Mucosa of descending colon (tissue), 3 donors: ENCODE measurements at regions of chr7 and their contacts with region 1.

Region 1: DNA sequence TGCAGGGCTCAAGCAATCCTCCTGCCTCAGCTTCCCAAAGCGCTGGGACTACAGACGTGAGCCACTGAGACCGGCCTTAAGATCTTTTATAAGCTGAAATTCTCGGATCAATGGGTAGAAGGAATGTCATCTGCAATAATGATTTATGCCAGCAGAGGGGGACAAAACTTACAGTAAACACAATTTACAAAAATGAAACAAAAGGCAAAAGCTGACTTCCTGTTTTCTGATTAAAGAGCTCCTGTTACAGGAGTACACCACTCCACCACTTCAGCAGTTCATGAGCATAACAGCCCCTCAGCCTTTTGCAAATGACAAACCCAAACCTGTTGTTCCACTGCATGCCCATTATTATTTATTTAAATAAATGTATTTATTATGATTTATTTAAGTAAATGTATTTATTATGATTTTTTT is 88.5 kb upstream of the ATP6V0A4 start:
- DNase-seq: peak in 1 of 3 donors; percentile 90
- ATAC-seq: peak; percentile 83
- H3K4me3 ChIP-seq: no peak overlapping the region
- H3K4me1 ChIP-seq: no peaks in the 10 kb centered on the region
- CTCF ChIP-seq: peak; percentile 30

Region 2: DNA sequence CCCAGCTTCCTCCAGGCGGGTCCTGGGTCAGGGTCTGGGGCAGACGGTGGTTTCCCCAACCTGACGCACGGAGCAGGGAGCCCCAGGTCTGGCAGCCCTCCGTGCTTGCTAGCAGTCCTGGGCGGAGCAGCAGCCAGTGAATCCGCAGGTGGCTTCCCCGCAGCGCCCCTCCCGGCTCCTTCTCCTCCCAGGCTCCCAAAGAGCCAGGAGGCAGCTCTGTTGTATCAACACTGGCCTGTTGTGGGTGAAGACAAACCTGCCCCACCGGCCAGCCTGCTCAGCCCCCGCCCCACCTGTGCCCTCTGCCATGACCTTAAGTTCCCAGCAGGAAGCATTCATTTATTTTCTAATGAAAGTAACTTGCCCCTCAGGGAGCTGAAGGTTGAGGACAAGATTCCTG is 112.7 kb before region 1 on chr7:
- intact Hi-C with region 1: no loop called
- DNase-seq: no peak
- ATAC-seq: no peak
- H3K4me3 ChIP-seq: no peak overlapping the region
- H3K4me1 ChIP-seq: no peaks in the 10 kb centered on the region
- CTCF ChIP-seq: no peak

Region 3: DNA sequence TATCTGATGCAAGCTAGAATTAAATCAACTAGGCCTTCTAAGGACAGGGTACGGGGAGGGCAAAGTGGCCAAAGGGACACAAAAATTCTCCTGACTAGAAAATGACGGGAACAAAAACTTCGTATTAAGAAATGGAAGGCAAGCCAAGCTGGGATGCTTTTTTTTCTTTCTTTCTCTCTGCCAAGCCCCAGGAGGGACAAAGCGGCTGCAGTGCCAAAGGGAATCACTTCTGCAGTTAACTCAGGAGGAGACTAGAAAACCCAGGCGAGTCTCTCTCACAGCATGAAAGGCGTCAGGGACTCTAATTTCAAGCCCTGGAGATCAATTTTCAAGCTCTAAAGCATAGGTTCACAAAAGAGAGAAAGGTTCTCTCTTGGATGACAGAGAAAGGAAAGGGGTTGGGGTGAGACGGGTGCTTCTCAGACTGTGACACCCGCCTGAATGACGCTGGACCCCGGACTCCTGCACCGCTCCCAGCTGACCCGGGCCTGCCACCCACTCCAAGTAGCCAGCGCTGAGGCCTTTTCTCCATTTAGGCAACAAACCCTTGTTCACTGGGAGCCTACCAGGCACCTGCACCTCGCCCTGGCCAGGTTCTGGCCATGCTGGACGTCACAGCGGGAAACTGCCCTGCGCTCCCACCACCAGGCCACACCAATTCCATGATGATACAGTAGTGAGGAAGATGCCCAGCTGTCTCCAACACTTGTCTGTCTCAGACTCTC is 38.2 kb after region 1 on chr7:
- intact Hi-C with region 1: no loop called
- DNase-seq: no peak
- ATAC-seq: no peak
- H3K4me3 ChIP-seq: no peak overlapping the region
- H3K4me1 ChIP-seq: no peaks in the 10 kb centered on the region
- CTCF ChIP-seq: no peak

Region 4: DNA sequence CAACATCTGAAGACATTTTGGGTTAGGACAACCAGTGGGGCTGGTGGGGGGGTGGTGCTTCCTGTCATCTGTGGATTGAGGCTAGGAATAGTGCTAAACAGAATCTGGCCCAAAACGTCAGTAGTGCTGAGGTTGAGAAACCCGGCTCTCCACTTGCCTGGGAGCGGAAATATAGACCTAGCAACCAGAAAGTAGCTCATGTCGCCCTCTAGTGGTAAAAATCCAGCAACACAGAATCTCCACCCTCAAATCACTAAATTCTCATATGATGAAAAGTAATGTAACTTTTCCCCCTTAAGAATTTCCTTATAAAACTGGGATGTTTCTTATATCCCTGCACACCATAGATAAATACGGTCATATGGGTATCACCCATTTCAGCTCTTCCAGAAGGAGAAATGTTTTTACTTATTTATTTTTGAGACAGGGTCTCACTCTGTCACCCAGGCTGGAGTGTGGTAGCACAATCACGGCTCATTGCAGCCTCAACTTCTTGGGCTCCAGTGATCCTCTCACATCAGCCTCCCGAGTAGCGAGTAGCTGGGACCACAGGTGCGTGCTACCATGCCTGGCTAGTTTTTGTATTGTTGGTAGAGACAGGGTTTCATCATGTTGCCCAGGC is 188.6 kb after region 1 on chr7:
- intact Hi-C with region 1: loop called in 1 of 2 experiments (anchors 5 kb)
- DNase-seq: peak in 2 of 3 donors; percentile 47 to 84
- ATAC-seq: peak; percentile 94
- H3K4me3 ChIP-seq: no peak overlapping the region
- H3K4me1 ChIP-seq: no peaks in the 10 kb centered on the region
- CTCF ChIP-seq: peak; percentile 62

Region 5: DNA sequence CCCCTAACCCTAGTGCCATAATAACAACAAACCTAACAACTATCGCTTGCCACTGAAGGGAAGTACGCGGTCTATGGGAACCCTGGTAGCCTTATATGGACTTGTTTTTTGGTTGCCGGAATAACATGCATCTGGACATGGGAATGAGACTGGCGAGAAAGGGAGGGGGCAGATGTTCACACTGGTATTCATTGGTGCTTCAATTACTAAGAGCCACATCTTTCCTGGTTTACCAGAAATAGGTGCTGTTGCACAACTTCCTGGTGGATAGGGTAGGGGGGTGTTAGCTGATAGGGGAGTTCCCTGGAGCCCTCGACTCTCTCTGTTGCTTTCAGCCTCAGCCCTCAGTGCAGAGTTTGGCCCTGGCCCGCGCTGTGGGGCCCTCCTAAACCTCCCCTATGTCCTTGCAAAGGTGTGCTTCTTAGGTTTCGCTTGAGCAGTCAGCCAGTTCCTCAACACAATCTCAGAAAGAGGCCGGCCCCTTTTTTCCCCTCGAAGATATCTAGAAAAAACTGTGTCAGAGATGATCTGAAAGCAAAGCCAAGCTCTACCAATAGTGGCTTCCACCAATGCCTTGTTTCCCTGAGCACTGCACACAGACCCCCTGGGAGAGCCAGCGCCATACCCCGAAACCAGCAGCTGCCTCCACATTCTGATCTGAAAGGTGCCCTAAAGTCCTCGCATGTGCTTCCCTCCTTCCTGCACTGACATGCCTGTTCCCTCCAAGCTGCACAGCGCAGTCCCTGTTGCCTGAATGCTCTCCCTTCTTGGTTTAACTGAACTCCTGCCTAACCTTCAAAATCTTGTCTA is 956.1 kb after region 1 on chr7:
- intact Hi-C with region 1: no loop called
- DNase-seq: no peak
- ATAC-seq: peak; percentile 13
- H3K4me3 ChIP-seq: no peak overlapping the region
- H3K4me1 ChIP-seq: no peaks in the 10 kb centered on the region
- CTCF ChIP-seq: no peak